Activated B cell treated with CpG ODN at 0.5 μM for 24 hours (primary cell): ENCODE measurements at regions of chr15 and their contacts with region 1.

Region 1: DNA sequence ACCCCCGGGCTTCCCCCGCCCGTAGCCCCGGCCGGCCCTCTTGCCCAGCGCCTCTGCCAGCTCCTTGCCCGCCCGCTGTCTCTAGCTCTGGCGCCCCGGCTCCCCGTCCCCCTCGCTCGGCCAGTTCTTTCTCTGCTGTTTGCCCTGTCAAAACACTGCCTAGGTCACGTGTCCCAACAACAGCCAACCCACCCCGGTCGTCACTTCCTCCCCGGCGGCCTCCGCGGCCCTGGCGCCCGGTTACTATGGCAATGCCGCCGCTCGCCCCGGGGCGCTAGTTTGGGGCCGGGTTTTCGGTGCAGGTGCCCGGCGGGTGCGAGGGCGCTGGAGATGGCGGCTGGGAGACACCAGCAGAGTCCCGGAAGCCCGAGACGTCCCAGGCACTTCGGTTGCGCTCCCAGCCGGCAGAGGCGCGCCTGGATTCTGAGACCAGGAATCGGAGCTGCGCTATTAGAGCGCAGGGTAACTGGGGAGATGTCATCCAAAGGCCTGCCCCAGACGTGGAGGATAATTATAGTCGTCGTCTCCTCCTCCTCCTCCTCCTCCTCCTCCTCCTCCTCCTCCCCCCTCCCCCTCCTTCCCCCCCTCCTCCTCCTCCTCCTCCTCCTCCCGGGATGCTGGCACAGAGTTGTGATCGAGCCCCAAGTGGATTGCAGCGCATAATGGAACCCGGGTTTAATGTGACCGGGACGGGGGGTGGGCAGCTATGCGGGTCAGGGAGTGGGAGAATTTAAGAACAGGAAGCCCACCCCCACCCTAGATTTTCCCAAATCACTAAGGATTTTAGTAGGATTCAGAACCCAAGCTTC is at the start of gene ATOSA:
- DNase-seq: peak; percentile 92
- ATAC-seq: peak; percentile 58
- H3K4me3 Mint-ChIP-seq: peak within 1 kb of the TSS; percentile 100
- H3K27ac Mint-ChIP-seq: peak within 1 kb of the TSS; percentile 98
- H3K4me1 Mint-ChIP-seq: peaks cover 77% of the 10 kb centered on the region
- H3K27me3 Mint-ChIP-seq: no peaks in the 10 kb centered on the region
- CTCF ChIP-seq: no peak
- total RNA-seq, gene ATOSA: 73.8 and 96.8 TPM in 2 replicates

Region 2: GRCh38 chr15:52227456-52227855 is 452.0 kb before region 1 on chr15:
- CTCF ChIA-PET with region 1: no interaction called
- POLR2A ChIA-PET with region 1: interaction called, 15 read pairs
- intact Hi-C with region 1: loop called (anchors 2 kb)
- DNase-seq: peak; percentile 40
- ATAC-seq: peak; percentile 78
- H3K4me3 Mint-ChIP-seq: no peak overlapping the region
- H3K27ac Mint-ChIP-seq: peak overlapping the region; percentile 93
- H3K4me1 Mint-ChIP-seq: peaks cover 84% of the 10 kb centered on the region
- H3K27me3 Mint-ChIP-seq: no peaks in the 10 kb centered on the region
- CTCF ChIP-seq: no peak

Region 3: DNA sequence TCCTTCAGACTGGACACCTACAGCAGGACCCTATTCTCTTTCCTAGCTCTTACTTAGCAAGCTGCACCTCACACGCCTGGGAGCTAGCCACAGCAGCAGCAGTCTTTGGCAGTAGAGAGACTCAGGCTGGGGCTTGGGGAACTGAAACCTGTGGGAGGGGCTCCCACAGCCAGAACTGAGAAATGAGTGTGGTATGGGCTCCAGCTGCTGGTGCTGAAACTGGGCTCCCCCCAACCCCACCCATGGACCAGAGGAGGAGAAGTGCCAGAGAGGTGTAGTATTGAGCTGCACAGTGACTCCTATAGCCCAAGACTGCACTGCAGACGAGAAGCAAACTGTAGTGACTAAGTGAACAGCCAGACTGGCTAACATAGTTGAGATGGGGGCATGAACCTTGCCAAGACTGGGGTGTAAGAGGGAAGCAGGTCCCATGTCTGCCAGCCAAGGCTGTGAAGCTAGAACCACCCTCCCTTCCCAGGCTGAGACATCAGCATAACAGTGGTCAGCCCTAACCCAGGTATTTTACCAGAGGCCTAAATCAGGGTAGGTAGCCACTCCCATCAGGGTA is 213.2 kb before region 1 on chr15:
- CTCF ChIA-PET with region 1: no interaction called
- POLR2A ChIA-PET with region 1: no interaction called
- intact Hi-C with region 1: loop called (anchors 5 kb)
- DNase-seq: peak; percentile 75
- ATAC-seq: peak; percentile 99
- H3K4me3 Mint-ChIP-seq: peak overlapping the region; percentile 25
- H3K27ac Mint-ChIP-seq: peak overlapping the region; percentile 91
- H3K4me1 Mint-ChIP-seq: peaks cover 52% of the 10 kb centered on the region
- H3K27me3 Mint-ChIP-seq: no peaks in the 10 kb centered on the region
- CTCF ChIP-seq: no peak

Region 4: DNA sequence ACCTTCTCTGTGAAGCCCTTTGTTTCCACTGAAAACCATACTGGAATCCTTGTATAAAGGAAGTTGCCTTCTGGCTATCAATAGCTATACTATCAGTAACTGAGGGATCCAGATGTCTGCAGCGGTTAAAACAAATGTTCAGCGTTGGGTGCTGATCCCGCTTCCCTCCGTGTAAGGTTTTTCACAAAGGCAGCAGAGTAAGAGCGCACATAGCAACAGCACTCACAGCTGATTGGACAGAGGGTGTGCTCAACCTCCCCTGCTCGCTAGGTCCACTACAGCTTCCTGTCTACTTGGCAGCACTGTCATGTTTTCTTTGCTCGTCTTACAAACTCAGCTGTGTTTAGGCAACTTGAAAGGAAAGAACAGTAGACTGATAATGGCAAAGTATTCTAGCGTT is 27.6 kb before region 1 on chr15:
- CTCF ChIA-PET with region 1: no interaction called
- POLR2A ChIA-PET with region 1: interaction called, 8 read pairs
- intact Hi-C with region 1: loop called (anchors 2 kb)
- DNase-seq: no peak
- ATAC-seq: peak; percentile 100
- H3K4me3 Mint-ChIP-seq: peak overlapping the region; percentile 38
- H3K27ac Mint-ChIP-seq: peak overlapping the region; percentile 46
- H3K4me1 Mint-ChIP-seq: peaks cover 13% of the 10 kb centered on the region
- H3K27me3 Mint-ChIP-seq: no peaks in the 10 kb centered on the region
- CTCF ChIP-seq: no peak

Region 5: DNA sequence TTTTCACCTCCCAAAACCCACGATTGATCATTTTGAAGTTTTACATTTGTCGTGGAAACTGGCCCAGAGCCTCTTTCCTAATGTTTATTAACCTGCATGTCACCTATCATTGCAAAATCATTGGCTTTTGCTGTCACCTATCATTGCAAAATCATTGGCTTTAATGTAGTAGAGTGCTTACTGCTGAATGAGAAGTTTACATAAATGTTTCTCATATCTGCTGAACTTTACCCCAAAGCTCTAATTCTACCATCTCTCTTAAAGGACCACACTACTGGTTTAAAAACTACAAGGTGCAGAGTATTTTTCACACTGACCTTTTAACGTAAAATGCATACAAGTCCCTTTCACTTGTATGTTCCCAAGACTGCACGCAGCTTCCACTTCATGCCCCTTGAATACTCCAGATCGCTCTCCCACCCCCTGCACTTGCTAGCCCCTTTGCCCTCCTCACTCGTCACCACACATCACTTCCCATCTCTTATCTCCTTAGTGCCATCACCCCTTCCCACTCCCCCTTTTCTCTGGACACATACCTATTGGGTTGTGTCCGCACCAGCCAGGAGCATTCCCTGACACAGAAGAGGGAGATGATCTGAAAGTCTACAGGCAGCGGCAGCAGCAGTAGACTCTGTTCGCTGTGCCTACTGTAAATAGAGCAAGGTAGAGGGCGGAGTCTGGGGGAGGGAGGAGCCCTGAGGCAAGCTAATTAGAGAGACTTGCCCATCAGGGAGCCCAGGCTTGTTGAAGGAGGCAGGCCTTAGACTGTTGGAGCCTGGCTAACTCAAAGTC is 29.9 kb after region 1 on chr15:
- CTCF ChIA-PET with region 1: interaction called, 5 read pairs
- POLR2A ChIA-PET with region 1: interaction called, 37 read pairs
- intact Hi-C with region 1: loop called (anchors 1 kb)
- DNase-seq: peak; percentile 47
- ATAC-seq: peak; percentile 99
- H3K4me3 Mint-ChIP-seq: peak overlapping the region; percentile 88
- H3K27ac Mint-ChIP-seq: peak overlapping the region; percentile 91
- H3K4me1 Mint-ChIP-seq: peaks cover 53% of the 10 kb centered on the region
- H3K27me3 Mint-ChIP-seq: no peaks in the 10 kb centered on the region
- CTCF ChIP-seq: no peak